PC-9 (cell line): ENCODE measurements at regions of chr3 and their contacts with region 1.

Region 1: DNA sequence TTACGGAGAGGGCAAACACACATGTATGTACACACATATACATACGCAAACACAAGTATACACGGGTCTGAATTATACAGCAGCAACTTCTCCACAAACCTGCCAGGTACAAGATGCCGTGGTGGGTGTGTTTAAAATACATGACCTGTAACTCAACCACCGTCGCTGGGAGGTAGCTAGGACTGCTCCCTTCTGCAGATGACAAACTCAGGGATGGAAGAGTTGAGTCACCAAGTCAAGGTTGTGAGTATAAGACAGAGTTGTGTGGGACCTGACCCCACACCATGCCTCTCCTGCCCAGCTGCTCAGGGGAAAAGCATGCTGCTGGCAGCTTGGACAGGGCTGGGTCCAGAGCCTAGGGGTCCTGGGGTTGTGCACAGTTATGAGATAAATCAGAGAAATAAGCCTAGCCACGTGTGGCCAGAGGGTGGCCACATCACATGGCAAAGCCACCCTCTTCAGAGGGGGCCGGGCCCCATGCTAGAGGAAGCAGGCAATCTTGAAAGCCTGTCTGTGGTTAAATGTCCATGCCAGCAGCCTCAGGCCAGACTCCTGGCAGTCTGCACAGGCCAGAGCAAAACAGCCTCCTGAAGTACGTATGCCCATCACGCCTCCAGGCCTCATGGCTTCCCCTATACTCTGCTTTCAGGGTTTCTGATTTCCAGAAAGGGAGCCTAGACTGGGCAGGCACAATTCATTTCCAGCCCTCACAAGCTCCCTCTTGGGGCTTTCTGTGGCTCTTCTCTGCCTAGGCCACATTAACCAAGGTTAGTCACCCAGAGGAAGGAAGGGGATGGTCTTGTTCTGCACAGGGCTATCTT is 107.7 kb upstream of the RPL32 start:
- DNase-seq: peak in 1 of 2 experiments; percentile 53
- H3K4me3 ChIP-seq: no peak overlapping the region
- H3K27ac ChIP-seq: no peak overlapping the region
- H3K4me1 ChIP-seq: peaks cover 16% of the 10 kb centered on the region
- H3K27me3 ChIP-seq: no peaks in the 10 kb centered on the region
- CTCF ChIP-seq: no peak

Region 2: GRCh38 chr3:12967606-12968351 is 18.7 kb after region 1 on chr3:
- CTCF ChIA-PET with region 1: no interaction called
- POLR2A ChIA-PET with region 1: no interaction called
- intact Hi-C with region 1: loop called (anchors 2 kb)
- DNase-seq: peak; percentile 40 to 87
- H3K4me3 ChIP-seq: peak overlapping the region; percentile 96
- H3K27ac ChIP-seq: no peak overlapping the region
- H3K4me1 ChIP-seq: peaks cover 14% of the 10 kb centered on the region
- H3K27me3 ChIP-seq: no peaks in the 10 kb centered on the region
- CTCF ChIP-seq: no peak